Right ventricle myocardium inferior (tissue), 1 donor: ENCODE measurements at regions of chr1 and their contacts with region 1.

Region 1: GRCh38 chr1:2194898-2195673 is 514 bp upstream of the FAAP20 start:
- DNase-seq: peak; percentile 94
- ATAC-seq: peak; percentile 82

Region 2: GRCh38 chr1:1799716-1800115 is 395.4 kb before region 1 on chr1:
- intact Hi-C with region 1: no loop called
- DNase-seq: no peak
- ATAC-seq: no peak

Region 3: DNA sequence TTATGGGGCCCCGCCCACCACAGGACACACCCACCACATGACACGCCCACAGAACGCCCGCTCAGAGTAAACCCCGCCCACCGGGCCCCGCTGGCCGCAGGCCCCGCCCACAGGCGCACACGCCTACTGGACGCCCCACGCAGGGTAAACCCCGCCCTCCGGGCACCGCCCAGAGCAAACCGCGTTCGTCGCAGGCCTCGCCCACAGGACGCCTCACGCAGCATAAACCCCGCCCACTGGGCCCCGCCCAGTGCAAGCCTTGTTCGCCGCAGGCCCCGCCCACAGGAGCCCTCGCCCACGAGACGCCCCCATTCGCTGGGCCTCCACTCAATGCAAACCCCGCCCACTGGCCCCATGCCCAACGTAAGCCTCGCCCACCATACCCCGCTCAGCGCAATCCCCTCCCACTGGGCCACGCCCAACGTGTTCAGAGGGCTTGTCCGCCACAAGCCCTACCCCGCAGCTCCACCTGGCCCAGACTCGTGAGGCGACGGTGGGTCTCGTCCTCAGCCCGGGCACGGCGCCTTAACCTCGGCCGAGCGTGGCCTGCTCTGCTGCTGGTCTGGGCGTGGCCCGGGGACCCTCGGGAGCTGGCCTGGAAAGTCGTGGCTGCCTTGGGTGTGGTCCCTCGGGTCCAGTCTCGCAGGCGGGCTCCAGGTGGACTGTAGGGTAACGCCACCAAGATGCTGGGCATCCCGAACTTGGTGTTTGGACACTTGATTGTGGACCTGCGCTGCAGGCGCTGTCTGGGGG is 275.6 kb before region 1 on chr1:
- intact Hi-C with region 1: no loop called
- DNase-seq: peak; percentile 99
- ATAC-seq: peak; percentile 94

Region 4: GRCh38 chr1:2233997-2234761 is 39.1 kb after region 1 on chr1:
- intact Hi-C with region 1: loop called (anchors 2 kb)
- DNase-seq: peak; percentile 98
- ATAC-seq: peak; percentile 84

Region 5: DNA sequence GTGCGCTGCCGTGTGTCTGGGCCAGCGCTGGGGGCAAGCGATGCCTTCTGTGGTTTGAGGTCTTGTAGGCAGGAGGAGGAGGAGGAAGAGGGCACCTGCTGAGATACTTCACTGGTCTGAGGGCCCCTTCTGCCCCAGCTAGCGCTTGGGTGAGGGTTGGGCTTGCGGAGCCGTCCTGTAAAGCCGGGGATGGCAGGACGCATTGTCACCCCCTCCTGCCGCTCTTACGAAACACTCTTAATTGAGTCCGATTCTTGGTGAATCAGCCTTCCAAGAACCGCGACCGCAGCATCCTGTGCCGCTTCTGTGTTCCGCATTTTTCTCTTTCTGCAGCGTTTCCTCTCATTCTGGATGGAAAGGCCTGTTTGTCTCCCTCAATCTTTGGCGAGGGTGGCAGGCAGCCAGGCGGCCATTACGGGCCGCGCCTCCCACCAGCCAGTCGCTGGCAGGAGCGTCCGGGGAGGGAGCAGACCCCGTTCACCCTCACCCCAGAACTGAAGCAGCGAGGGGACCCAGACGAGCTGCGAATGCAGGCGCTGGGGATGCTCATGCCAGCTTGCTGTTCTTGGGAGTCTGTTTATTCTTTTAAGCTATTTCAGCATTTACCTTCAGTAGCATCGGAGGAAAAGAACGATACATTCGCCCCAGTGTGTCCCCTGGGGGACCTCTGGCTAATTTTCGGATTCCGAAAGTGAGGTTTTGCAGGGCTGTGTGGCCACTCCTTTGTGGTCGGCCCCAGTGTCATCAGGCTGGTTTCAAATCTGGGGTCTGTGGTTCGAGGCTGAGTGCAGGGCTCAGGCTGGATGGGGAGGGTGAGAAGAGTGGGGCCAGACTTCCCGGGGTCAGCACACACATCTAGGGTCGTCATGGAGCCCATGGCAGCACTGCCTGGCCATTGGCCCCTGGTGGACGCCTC is 95.8 kb after region 1 on chr1:
- intact Hi-C with region 1: no loop called
- DNase-seq: peak; percentile 93
- ATAC-seq: peak; percentile 83

Region 6: DNA sequence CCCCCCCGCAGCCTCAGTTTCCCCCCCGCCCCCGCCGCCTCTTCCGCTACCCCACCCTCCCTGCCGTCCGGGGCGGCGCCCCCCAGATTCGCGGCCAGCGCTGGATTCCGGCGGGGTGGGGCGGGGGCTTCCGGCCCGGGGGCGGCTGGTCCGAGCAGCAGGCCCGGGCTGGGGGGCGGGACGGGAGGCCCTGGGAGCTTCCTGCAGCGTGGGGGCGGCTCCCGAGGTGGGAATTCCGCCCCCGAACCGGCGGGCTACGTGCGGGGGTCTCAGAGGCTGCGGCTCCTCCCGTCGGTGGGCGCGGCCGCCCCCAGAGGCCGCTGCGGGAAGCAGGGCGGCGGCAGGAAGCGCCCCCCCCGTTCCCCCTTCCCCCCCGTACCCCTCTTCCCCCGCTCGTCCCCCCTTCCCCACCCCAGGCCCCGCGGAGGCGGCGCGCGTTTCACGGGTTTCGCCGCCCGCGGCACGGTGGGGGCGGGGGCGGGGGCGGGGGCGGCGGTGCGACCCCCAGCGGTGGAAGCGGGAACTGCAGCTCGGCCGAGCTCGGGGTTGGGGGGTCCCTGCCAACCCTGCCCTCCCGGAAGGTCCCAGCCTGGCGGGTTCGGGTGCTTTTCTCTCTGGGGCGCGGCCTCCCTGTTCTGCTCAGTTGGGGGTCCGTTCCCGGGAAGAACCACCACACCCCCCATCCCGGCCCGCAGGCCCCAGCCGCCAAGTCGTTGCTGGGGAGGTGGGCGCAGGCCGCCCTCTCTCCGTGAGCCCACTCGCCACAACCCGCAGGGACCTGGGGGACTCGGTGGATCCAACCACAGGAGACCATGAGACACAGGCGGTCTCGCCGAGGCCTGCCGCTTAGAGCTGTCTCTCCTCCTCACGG is 120.0 kb after region 1 on chr1:
- intact Hi-C with region 1: loop called (anchors 2 kb)
- DNase-seq: no peak
- ATAC-seq: peak; percentile 30

Region 7: GRCh38 chr1:2381741-2382620 is 186.9 kb after region 1 on chr1:
- intact Hi-C with region 1: loop called (anchors 1 kb)
- DNase-seq: peak; percentile 92
- ATAC-seq: peak; percentile 96

Region 8: DNA sequence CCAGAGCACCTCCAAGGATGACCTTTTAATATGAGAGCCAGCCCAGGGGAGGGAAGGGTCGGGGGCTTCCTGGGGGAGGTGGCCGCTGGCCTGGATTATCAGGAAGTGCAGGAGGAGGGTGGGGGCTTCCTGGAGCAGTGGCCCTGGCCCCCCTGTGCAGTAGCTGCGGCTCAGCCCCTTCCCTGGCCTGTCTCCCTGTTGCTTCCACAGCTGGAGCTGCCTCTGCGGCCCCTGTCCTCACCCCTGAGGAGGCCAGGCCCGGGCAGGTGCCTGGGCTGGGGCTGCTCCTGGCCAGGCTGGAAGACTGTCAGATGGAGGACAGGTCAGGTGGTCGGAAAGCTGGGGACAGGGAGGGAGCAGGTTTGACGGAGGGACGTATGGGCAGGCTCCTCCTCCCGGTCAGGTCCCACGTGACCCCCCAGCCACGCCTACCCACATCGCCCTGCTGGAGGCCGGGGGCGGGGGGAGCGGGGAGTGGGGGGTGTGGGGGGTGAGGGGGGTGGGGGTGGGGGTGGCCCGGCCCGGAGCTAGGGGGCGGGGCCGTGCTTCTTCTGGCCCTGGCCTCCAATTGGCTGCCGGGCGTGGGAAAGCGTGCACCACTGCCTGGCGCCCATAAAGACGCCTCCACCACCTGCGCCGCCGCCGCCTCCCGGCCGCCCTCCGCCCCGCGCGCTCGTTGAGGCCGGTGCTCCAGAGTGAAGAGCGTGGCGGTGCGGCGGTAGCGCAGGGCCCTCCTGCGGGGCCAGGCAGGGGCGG is 350.9 kb after region 1 on chr1:
- intact Hi-C with region 1: loop called (anchors 10 kb)
- DNase-seq: peak; percentile 95
- ATAC-seq: peak; percentile 72

Region 9: DNA sequence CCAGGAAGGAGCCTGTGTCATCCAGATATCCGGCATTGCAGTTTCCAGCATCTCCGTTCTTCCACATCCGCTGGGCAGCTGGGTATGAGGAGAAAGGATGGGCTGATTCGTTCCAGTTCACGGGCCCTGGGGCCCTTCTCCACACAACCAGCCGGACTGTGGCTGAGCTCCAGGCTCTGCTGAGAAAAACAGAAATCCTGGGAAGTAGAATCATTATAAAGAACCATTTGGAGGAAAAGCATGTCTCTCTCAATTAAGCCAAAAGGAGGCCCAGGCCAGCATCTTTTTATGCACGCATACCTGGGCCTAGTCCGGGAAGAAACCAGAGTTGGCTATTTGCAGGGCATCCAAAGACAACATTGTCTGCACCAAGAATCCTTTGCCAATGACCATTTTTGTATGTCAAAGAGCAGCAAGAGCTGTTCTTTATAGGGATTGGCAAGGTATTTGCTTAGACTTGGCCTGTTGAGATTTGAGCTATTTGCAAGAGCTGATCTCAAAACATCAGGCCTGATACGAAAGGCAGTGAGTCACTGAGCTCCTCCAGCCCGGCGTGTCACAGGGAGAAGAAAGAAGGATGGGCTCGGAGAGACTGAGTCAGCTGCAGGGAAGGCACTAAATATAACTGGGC is 1174.5 kb after region 1 on chr1:
- intact Hi-C with region 1: loop called (anchors 5 kb)
- DNase-seq: peak; percentile 51
- ATAC-seq: peak; percentile 51